Calu3 (cell line): ENCODE measurements at regions of chr13 and their contacts with region 1.

Region 1: DNA sequence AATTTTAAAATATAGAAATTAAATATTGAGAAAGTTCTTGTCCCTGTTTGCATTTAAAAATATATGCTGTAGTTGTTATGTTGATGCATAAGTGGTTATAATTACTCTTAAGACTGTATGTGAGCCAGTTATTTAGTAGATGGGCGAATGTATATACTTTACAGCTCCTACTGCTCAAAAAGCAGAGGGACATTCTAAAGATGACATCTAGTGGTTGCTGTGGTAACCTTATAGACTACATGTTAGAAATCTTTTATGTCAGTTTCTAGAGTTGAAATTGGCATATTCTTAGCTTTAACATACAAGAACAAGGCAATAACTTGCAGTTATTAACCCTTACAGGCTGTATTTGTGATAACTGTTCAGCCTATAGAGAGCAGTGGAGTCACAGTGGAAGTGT is 160.5 kb downstream of the OLFM4 start:
- DNase-seq: no peak
- H3K4me3 Mint-ChIP-seq: no peak overlapping the region
- H3K27ac Mint-ChIP-seq: no peak overlapping the region
- H3K4me1 Mint-ChIP-seq: no peaks in the 10 kb centered on the region
- H3K27me3 Mint-ChIP-seq: no peaks in the 10 kb centered on the region
- CTCF ChIP-seq: no peak

Region 2: GRCh38 chr13:52862358-52863206 is 326.6 kb before region 1 on chr13:
- CTCF ChIA-PET with region 1: no interaction called
- intact Hi-C with region 1: loop called (anchors 10 kb)
- DNase-seq: peak; percentile 45
- H3K4me3 Mint-ChIP-seq: no peak overlapping the region
- H3K27ac Mint-ChIP-seq: no peak overlapping the region
- H3K4me1 Mint-ChIP-seq: no peaks in the 10 kb centered on the region
- H3K27me3 Mint-ChIP-seq: peaks cover 35% of the 10 kb centered on the region
- CTCF ChIP-seq: no peak